ENCODE measurements at regions of chr11 and their contacts with region 1.

Region 1: DNA sequence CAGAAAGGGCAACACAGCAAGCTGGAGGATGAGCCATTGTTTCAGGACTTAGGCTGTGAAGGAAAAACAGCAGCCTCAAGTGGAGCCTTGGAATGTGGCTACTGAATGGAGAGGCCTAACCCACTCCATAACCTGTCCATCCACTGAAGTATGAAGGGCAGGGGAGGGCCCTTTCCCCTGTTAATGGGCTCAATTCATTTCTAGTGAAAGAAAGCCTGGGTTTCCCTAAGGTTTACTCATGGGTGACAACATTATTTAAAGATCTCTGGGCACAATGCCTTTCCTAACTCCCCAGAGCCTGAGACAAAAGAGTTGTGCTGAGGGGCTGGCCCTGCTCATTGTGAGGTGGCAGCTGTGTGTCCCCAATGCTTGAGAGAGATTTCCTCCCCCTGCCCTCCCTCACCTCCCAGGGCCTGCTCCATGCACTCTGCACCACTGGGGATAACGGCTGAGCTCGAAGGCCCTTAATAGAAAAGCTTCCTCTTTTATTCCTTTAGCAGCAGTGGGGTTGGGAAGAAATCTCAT is 83.8 kb downstream of the ME3 start:
- DNase-seq: no peak
- ATAC-seq: no peak

Region 2: GRCh38 chr11:86477495-86478155 is 111.0 kb before region 1 on chr11:
- intact Hi-C with region 1: loop called (anchors 10 kb)
- DNase-seq: no peak
- ATAC-seq: peak; percentile 51

Region 3: GRCh38 chr11:87072787-87073186 is 484.2 kb after region 1 on chr11:
- intact Hi-C with region 1: no loop called
- DNase-seq: no peak
- ATAC-seq: no peak

Measured in Right ventricle myocardium superior (tissue), 1 donor.